Activated B cell treated with CpG ODN at 0.5 μM for 24 hours (primary cell): ENCODE measurements at regions of chr9 and their contacts with region 1.

Region 1: DNA sequence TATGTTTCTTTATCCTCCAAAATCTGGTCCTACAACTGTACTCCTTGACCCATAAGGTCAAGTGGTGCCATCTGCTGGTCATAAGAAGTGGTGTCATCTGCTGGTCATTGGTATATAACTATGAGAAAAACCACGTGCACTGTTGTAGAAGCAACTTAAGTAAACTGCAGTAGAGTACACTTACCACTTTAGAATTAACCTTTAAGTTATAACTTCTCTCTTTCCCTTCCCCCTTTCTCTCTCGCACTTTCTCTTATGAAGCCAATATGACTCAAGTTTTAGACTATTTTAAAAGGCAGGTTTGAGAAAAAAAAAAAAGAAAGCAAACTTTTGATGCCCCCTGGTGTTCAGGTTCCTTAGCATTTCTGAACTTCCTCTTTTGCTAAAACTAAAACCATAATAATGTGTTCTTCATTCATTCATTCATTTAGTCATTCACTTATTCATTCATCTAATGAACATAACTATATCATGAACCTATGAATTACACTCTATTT is 12.8 kb upstream of the MTAP start:
- DNase-seq: no peak
- ATAC-seq: peak; percentile 98
- H3K4me3 Mint-ChIP-seq: peak overlapping the region; percentile 80
- H3K27ac Mint-ChIP-seq: peak overlapping the region; percentile 76
- H3K4me1 Mint-ChIP-seq: peaks cover 7% of the 10 kb centered on the region
- H3K27me3 Mint-ChIP-seq: peaks cover 17% of the 10 kb centered on the region
- CTCF ChIP-seq: peak; percentile 85

Region 2: DNA sequence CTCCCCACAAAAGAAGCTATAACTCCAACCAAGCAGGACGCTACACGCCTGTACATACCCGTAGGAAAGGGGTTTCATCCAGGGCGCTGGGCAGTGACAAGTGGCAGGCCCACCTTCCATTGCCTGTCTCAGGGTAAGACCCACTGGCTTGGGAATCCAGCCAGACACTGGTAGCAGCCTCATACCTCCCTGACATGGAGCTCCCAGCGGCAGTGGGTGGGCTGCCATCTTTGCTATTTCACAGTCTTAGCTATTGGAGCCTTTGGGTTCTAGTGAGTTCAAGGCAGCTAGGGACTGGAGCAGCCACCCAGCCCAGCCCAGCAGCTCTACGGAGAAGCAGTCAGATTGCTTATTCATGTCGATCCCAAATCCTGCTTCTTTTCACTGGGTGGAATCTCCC is 579.3 kb before region 1 on chr9:
- CTCF ChIA-PET with region 1: no interaction called
- POLR2A ChIA-PET with region 1: no interaction called
- intact Hi-C with region 1: loop called (anchors 1 kb)
- DNase-seq: no peak
- ATAC-seq: no peak
- H3K4me3 Mint-ChIP-seq: no peak overlapping the region
- H3K27ac Mint-ChIP-seq: no peak overlapping the region
- H3K4me1 Mint-ChIP-seq: peaks cover 13% of the 10 kb centered on the region
- H3K27me3 Mint-ChIP-seq: peaks cover 5% of the 10 kb centered on the region
- CTCF ChIP-seq: no peak

Region 3: GRCh38 chr9:21252721-21253547 is 536.7 kb before region 1 on chr9:
- CTCF ChIA-PET with region 1: no interaction called
- POLR2A ChIA-PET with region 1: interaction called, 3 read pairs
- intact Hi-C with region 1: loop called (anchors 1 kb)
- DNase-seq: no peak
- ATAC-seq: peak; percentile 61
- H3K4me3 Mint-ChIP-seq: no peak overlapping the region
- H3K27ac Mint-ChIP-seq: no peak overlapping the region
- H3K4me1 Mint-ChIP-seq: peaks cover 4% of the 10 kb centered on the region
- H3K27me3 Mint-ChIP-seq: peaks cover 25% of the 10 kb centered on the region
- CTCF ChIP-seq: no peak

Region 4: DNA sequence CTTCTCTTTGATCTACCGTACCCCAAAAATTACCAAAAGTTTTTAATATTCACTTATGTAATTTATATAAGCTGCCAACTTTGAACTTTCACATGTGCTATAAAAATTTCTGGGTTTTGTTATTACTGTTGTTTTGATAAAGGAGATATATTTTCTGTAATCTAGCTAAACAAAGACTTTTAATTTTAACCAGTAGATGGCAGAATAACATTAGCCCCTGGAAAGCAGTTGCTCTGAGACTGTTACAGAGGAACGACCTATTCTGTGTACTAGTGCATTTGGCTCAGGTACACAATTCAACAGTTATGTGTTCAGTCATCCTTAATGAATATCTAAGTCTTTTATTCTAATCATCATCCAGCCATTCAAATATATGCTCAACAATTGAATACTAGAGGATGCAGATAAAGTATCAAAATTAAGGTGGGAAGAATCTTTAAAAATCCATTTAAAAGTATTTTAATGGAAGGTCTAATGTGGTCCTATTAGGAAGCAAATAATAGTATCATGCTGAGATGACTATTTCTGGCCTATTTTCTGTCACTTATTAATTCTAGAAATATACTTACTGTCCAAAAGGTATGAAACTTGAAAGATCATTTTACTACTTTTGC is 463.0 kb before region 1 on chr9:
- CTCF ChIA-PET with region 1: interaction called, 18 read pairs
- POLR2A ChIA-PET with region 1: no interaction called
- intact Hi-C with region 1: loop called (anchors 1 kb)
- DNase-seq: no peak
- ATAC-seq: peak; percentile 81
- H3K4me3 Mint-ChIP-seq: no peak overlapping the region
- H3K27ac Mint-ChIP-seq: no peak overlapping the region
- H3K4me1 Mint-ChIP-seq: peaks cover 29% of the 10 kb centered on the region
- H3K27me3 Mint-ChIP-seq: no peaks in the 10 kb centered on the region
- CTCF ChIP-seq: peak; percentile 68

Region 5: GRCh38 chr9:21709464-21710058 is 80.0 kb before region 1 on chr9:
- CTCF ChIA-PET with region 1: no interaction called
- POLR2A ChIA-PET with region 1: no interaction called
- intact Hi-C with region 1: loop called (anchors 1 kb)
- DNase-seq: no peak
- ATAC-seq: peak; percentile 68
- H3K4me3 Mint-ChIP-seq: no peak overlapping the region
- H3K27ac Mint-ChIP-seq: no peak overlapping the region
- H3K4me1 Mint-ChIP-seq: no peaks in the 10 kb centered on the region
- H3K27me3 Mint-ChIP-seq: peaks cover 16% of the 10 kb centered on the region
- CTCF ChIP-seq: peak; percentile 48

Region 6: DNA sequence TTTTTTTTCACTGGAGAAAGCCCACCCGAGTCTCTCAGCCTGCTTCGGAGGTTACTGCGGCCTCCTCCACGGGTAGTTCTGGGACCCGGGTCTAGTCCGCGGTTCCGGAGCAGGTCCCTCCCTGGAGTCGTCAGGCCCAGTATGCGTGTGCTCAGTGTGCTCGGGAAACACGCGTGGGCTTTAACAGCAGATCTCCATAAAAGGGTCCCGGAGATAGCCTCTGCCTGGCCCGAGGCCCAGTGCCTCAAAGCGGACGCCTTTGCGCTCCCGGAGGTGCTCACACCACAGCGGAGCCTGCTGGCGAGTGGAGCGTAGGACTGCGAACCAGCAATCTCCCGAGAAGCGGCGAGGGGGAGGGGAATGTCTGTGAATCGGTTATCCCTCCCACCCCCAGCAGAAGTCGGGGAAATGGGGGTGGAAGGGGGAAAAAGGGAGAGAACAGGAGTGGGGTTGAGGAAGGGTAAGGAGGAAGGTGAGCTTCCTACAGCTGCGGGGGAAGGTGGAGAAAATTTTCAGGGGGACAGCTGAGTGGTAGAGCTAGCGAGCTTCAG is 175.9 kb after region 1 on chr9:
- CTCF ChIA-PET with region 1: no interaction called
- POLR2A ChIA-PET with region 1: no interaction called
- intact Hi-C with region 1: no loop called
- DNase-seq: peak; percentile 41
- ATAC-seq: peak; percentile 67
- H3K4me3 Mint-ChIP-seq: peak overlapping the region; percentile 77
- H3K27ac Mint-ChIP-seq: peak overlapping the region; percentile 64
- H3K4me1 Mint-ChIP-seq: peaks cover 19% of the 10 kb centered on the region
- H3K27me3 Mint-ChIP-seq: peaks cover 74% of the 10 kb centered on the region
- CTCF ChIP-seq: no peak